Activated B cell treated with CpG ODN at 0.5 μM for 24 hours (primary cell): ENCODE measurements at regions of chr3 and their contacts with region 1.

Region 1: DNA sequence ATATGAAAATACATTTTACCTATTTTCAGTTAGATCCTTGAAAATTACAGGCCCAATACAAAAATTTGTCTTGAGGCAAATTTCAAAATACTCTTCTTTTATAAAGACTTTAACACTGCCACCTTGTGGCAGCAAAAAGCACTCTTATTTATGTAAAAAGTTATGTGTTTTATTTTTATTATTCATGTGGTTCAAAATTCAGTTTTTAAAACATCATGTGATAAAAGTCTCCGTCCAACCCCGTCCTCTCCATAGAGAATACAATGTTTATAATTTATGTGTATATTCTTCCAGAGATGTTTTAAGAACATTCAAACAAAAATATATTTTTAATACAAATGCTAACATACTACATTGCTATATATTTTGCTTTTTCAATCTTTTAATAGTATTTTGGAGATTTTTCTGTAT is 36.9 kb upstream of the TRIM59 start:
- DNase-seq: no peak
- ATAC-seq: peak; percentile 25
- H3K4me3 Mint-ChIP-seq: peak overlapping the region; percentile 76
- H3K27ac Mint-ChIP-seq: no peak overlapping the region
- H3K4me1 Mint-ChIP-seq: peaks cover 7% of the 10 kb centered on the region
- H3K27me3 Mint-ChIP-seq: no peaks in the 10 kb centered on the region
- CTCF ChIP-seq: peak; percentile 62

Region 2: DNA sequence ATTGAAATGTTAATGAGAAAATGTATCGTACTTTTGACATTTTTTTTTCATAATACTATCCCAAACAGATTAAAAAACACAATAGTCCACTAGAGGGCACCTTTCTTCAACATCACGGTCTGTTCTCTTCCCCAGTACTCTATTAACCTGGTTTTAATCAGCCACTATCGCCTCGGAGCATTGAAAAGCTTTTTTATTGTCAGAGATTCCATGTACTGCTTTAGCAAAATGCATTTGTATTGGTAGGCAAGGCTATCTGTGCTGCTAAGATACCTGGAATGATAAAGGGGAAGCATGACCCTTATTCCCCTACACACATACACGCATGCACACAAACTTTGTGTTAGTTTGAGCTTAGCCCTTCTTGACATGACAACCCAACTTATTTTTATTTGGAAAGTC is 657.9 kb before region 1 on chr3:
- CTCF ChIA-PET with region 1: no interaction called
- POLR2A ChIA-PET with region 1: no interaction called
- intact Hi-C with region 1: loop called (anchors 1 kb)
- DNase-seq: no peak
- ATAC-seq: peak; percentile 31
- H3K4me3 Mint-ChIP-seq: no peak overlapping the region
- H3K27ac Mint-ChIP-seq: no peak overlapping the region
- H3K4me1 Mint-ChIP-seq: peaks cover 4% of the 10 kb centered on the region
- H3K27me3 Mint-ChIP-seq: no peaks in the 10 kb centered on the region
- CTCF ChIP-seq: no peak

Region 3: GRCh38 chr3:160027541-160028195 is 458.8 kb before region 1 on chr3:
- CTCF ChIA-PET with region 1: no interaction called
- POLR2A ChIA-PET with region 1: no interaction called
- intact Hi-C with region 1: loop called (anchors 1 kb)
- DNase-seq: no peak
- ATAC-seq: no peak
- H3K4me3 Mint-ChIP-seq: no peak overlapping the region
- H3K27ac Mint-ChIP-seq: peak overlapping the region; percentile 36
- H3K4me1 Mint-ChIP-seq: no peaks in the 10 kb centered on the region
- H3K27me3 Mint-ChIP-seq: no peaks in the 10 kb centered on the region
- CTCF ChIP-seq: no peak

Region 4: GRCh38 chr3:160163229-160163878 is 323.1 kb before region 1 on chr3:
- CTCF ChIA-PET with region 1: no interaction called
- POLR2A ChIA-PET with region 1: no interaction called
- intact Hi-C with region 1: loop called (anchors 2 kb)
- DNase-seq: no peak
- ATAC-seq: no peak
- H3K4me3 Mint-ChIP-seq: no peak overlapping the region
- H3K27ac Mint-ChIP-seq: no peak overlapping the region
- H3K4me1 Mint-ChIP-seq: no peaks in the 10 kb centered on the region
- H3K27me3 Mint-ChIP-seq: peaks cover 4% of the 10 kb centered on the region
- CTCF ChIP-seq: no peak

Region 5: DNA sequence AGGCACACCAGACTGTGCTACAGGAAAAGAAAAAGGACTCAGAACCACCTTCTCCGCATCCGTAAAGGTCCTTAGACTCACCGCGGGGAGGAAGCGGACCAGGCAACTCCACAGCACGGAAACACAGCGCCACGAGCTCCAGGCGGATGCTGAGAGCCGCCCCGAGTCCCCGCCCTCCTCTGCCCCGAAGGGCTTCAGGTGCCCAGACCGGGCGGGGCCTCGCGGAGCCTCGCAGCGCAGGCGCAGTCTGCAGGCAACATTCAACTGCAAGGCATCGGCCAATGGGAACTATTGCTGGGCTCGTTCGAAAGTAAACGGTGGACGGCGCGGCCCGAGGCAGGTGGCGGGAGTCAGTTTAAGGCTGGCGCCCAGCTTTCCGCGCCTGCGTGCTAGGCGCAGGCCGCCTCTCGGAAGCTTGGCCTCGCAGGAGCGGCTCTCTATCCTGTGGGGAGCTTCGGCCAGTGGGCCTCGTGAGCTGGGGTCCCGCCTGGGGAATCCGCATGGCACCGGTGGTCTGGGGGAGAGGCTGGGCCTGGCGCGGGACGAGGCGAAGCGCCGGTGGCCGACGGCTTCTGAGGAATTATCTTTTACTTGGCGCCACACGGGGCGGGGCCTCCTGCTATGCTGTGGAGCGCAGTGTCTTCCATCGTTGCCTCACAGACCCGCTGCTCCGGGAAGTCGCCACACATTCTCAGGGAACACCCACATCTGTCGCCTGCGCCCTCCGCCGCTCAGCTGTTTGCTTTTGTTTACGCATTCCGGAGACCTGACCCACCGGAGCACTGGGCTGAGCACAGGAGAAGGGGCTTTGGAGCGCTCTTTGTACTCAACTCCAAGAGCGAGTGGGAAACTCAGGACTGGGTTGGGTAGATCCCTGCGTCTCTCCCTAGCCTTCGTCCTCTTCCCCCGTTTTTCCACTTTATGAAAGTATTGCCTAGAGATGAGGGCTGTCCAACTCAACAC is 36.5 kb before region 1 on chr3 and contains the start of gene TRIM59:
- CTCF ChIA-PET with region 1: no interaction called
- POLR2A ChIA-PET with region 1: no interaction called
- intact Hi-C with region 1: loop called (anchors 2 kb)
- DNase-seq: peak; percentile 92
- ATAC-seq: peak; percentile 96
- H3K4me3 Mint-ChIP-seq: peak within 1 kb of the TSS; percentile 94
- H3K27ac Mint-ChIP-seq: peak within 1 kb of the TSS; percentile 90
- H3K4me1 Mint-ChIP-seq: peaks cover 33% of the 10 kb centered on the region
- H3K27me3 Mint-ChIP-seq: no peaks in the 10 kb centered on the region
- CTCF ChIP-seq: no peak
- total RNA-seq, gene TRIM59: 23.4 TPM in 2 replicates

Region 6: GRCh38 chr3:160941885-160942494 is 455.5 kb after region 1 on chr3:
- CTCF ChIA-PET with region 1: no interaction called
- POLR2A ChIA-PET with region 1: no interaction called
- intact Hi-C with region 1: loop called (anchors 2 kb)
- DNase-seq: no peak
- ATAC-seq: peak; percentile 87
- H3K4me3 Mint-ChIP-seq: no peak overlapping the region
- H3K27ac Mint-ChIP-seq: no peak overlapping the region
- H3K4me1 Mint-ChIP-seq: peaks cover 4% of the 10 kb centered on the region
- H3K27me3 Mint-ChIP-seq: no peaks in the 10 kb centered on the region
- CTCF ChIP-seq: no peak